ENCODE measurements at regions of chr11 and their contacts with region 1.

Region 1: GRCh38 chr11:128733440-128734102 is 39.7 kb downstream of the FLI1 start:
- DNase-seq: no peak
- ATAC-seq: peak; percentile 46
- H3K4me3 Mint-ChIP-seq: peak overlapping the region; percentile 72
- H3K27ac Mint-ChIP-seq: peak overlapping the region; percentile 89
- H3K4me1 Mint-ChIP-seq: peaks cover 80% of the 10 kb centered on the region
- H3K27me3 Mint-ChIP-seq: no peaks in the 10 kb centered on the region

Region 2: DNA sequence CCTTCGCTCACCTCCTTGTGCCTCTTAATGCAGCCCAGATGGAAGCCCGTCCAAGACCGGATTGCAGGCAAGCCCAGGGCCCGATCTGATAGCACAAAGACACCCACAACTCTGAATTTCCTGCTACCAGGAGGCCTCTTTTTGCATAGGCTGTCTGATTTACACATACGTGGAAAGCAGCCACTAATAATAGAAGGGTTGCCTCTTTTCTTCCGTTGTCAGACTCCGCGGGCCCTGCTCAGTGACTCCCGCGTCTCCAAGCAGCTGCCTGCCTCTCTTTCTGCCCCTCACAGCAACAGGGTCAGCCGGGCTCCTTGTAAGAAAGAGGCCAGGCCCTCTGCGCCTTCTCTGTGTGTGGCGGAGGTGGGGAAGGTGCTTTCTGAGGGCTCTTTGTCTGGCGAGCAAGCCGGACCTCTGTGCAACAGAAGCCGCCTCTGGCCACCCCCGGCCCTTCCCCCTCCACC is 13.0 kb before region 1 on chr11:
- POLR2A ChIA-PET with region 1: interaction called, 35 read pairs
- DNase-seq: peak; percentile 55
- ATAC-seq: peak; percentile 53
- H3K4me3 Mint-ChIP-seq: peak overlapping the region; percentile 84
- H3K27ac Mint-ChIP-seq: peak overlapping the region; percentile 92
- H3K4me1 Mint-ChIP-seq: peaks cover 89% of the 10 kb centered on the region
- H3K27me3 Mint-ChIP-seq: no peaks in the 10 kb centered on the region

Region 3: GRCh38 chr11:128868841-128869580 is 135.4 kb after region 1 on chr11:
- POLR2A ChIA-PET with region 1: no interaction called
- DNase-seq: peak; percentile 58
- ATAC-seq: peak; percentile 66
- H3K4me3 Mint-ChIP-seq: no peak overlapping the region
- H3K27ac Mint-ChIP-seq: no peak overlapping the region
- H3K4me1 Mint-ChIP-seq: no peaks in the 10 kb centered on the region
- H3K27me3 Mint-ChIP-seq: peaks cover 12% of the 10 kb centered on the region

Region 4: GRCh38 chr11:128905345-128906184 is 172.0 kb after region 1 on chr11:
- POLR2A ChIA-PET with region 1: no interaction called
- DNase-seq: peak; percentile 51
- ATAC-seq: peak; percentile 81
- H3K4me3 Mint-ChIP-seq: peak overlapping the region; percentile 81
- H3K27ac Mint-ChIP-seq: no peak overlapping the region
- H3K4me1 Mint-ChIP-seq: peaks cover 5% of the 10 kb centered on the region
- H3K27me3 Mint-ChIP-seq: peaks cover 62% of the 10 kb centered on the region

Measured in activated naive CD8-positive, alpha-beta T cell treated with anti-CD3 and anti-CD28 coated beads, Interleukin-2, amount 10 ng/mL, durations not matched to agents 7 days and 5 days (primary cell).